ENCODE measurements at regions of chr2 and their contacts with region 1.

Region 1: GRCh38 chr2:237674731-237675276 is 47.4 kb downstream of the LRRFIP1 start:
- DNase-seq: peak; percentile 75
- ATAC-seq: peak; percentile 55
- H3K4me3 ChIP-seq: no peak overlapping the region
- H3K27ac ChIP-seq: peak overlapping the region; percentile 58; the same call in 1 of the 2 replicates
- H3K4me1 ChIP-seq: peaks cover 41% of the 10 kb centered on the region
- H3K27me3 ChIP-seq: no peaks in the 10 kb centered on the region
- CTCF ChIP-seq: no peak
- POLR2A ChIP-seq: no peak
- RAD21 ChIP-seq: peak; percentile 7; the same call in 1 of the 2 replicates

Region 2: GRCh38 chr2:237581751-237582746 is 92.8 kb before region 1 on chr2:
- CTCF ChIA-PET with region 1: interaction called, 3 read pairs
- POLR2A ChIA-PET with region 1: no interaction called
- dilution Hi-C with region 1: no loop called
- in situ Hi-C with region 1: no loop called
- intact Hi-C with region 1: loop called (anchors 2 kb)
- DNase-seq: peak; percentile 71
- ATAC-seq: peak; percentile 92
- H3K4me3 ChIP-seq: no peak overlapping the region
- H3K27ac ChIP-seq: no peak overlapping the region
- H3K4me1 ChIP-seq: no peaks in the 10 kb centered on the region
- H3K27me3 ChIP-seq: peaks cover 4% of the 10 kb centered on the region; the same call in 1 of the 2 replicates
- CTCF ChIP-seq: peak; percentile 66
- POLR2A ChIP-seq: no peak
- RAD21 ChIP-seq: peak; percentile 77

Region 3: DNA sequence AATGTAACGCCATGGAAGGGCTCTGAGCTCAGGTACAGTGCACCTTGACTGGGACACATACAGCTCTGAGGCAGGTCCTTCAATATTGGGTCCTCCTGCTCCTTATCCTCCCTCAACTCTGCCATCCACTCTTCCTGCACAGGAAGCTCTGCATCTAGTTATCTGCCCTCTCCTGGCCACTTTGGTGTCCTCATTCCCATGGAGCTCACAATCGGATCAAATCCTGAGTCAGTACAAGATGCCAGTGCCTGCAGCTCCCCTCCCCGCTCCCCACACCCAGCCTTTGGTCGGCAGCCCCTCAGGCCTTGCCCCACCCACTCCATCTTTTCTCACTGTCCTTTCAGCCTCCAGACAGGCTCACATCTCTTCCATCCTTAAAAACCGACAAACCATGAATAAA is 10.6 kb after region 1 on chr2:
- CTCF ChIA-PET with region 1: interaction called, 16 read pairs
- POLR2A ChIA-PET with region 1: interaction called, 4 read pairs
- dilution Hi-C with region 1: no loop called
- in situ Hi-C with region 1: no loop called
- intact Hi-C with region 1: loop called (anchors 2 kb)
- DNase-seq: no peak
- ATAC-seq: no peak
- H3K4me3 ChIP-seq: no peak overlapping the region
- H3K27ac ChIP-seq: no peak overlapping the region
- H3K4me1 ChIP-seq: peaks cover 14% of the 10 kb centered on the region
- H3K27me3 ChIP-seq: no peaks in the 10 kb centered on the region
- CTCF ChIP-seq: peak; percentile 48
- POLR2A ChIP-seq: no peak
- RAD21 ChIP-seq: peak; percentile 36

Region 4: GRCh38 chr2:238288650-238289573 is 614.1 kb after region 1 on chr2:
- CTCF ChIA-PET with region 1: no interaction called
- POLR2A ChIA-PET with region 1: no interaction called
- dilution Hi-C with region 1: no loop called
- in situ Hi-C with region 1: no loop called
- intact Hi-C with region 1: loop called (anchors 10 kb)
- DNase-seq: peak; percentile 99
- ATAC-seq: peak; percentile 90
- H3K4me3 ChIP-seq: peak overlapping the region; percentile 69
- H3K27ac ChIP-seq: peak overlapping the region; percentile 33; the same call in 1 of the 2 replicates
- H3K4me1 ChIP-seq: peaks cover 23% of the 10 kb centered on the region
- H3K27me3 ChIP-seq: peaks cover 3% of the 10 kb centered on the region; the same call in 1 of the 2 replicates
- CTCF ChIP-seq: peak; percentile 46
- POLR2A ChIP-seq: peak; percentile 76
- RAD21 ChIP-seq: no peak

Measured in IMR-90 (cell line).